Motor neuron (in vitro differentiated cells): ENCODE measurements at regions of chr7 and their contacts with region 1.

Region 1: DNA sequence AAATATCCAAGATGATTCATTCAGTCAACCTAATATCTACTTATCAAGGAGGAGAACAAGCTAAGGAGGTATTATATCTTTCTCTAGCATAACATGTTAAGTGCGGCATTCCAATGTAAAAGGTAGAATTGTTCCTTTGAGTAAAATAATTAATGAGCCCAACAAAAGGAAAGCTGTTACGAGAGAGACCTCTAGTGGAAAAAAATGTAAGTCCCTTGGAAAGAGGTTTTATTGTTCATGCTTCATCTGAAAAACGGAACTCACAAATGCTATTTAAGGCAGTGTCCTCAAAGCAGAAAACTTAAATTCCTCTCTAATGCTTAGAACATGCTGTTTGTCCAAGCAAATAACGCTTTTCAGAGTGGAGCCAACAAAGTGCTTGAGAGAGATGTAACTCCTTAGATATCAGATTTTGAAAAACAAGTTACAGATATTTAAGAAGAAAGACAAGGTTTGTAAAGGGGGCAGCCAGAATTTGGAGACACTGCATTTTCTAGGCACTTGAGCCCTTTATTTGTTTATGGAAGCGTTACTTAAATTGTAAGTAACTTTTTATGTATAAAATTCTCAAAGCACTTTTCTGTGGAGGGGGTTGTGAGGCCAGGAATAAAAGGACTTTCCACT is 119.9 kb downstream of the TFEC start:
- ATAC-seq: peak in 3 of 8 experiments; percentile 31 to 47 (median 41)
- H3K4me3 ChIP-seq: no peak overlapping the region
- H3K27ac ChIP-seq: no peak overlapping the region
- H3K4me1 ChIP-seq: no peaks in the 10 kb centered on the region

Region 2: GRCh38 chr7:116122972-116123595 is 212.4 kb after region 1 on chr7:
- in situ Hi-C with region 1: loop called in 1 of 9 experiments (anchors 10 kb)
- ATAC-seq: peak in 1 of 8 experiments; percentile 16
- H3K4me3 ChIP-seq: no peak overlapping the region
- H3K27ac ChIP-seq: no peak overlapping the region
- H3K4me1 ChIP-seq: peaks cover 0 to 3% of the 10 kb centered on the region in 2 donors

Region 3: DNA sequence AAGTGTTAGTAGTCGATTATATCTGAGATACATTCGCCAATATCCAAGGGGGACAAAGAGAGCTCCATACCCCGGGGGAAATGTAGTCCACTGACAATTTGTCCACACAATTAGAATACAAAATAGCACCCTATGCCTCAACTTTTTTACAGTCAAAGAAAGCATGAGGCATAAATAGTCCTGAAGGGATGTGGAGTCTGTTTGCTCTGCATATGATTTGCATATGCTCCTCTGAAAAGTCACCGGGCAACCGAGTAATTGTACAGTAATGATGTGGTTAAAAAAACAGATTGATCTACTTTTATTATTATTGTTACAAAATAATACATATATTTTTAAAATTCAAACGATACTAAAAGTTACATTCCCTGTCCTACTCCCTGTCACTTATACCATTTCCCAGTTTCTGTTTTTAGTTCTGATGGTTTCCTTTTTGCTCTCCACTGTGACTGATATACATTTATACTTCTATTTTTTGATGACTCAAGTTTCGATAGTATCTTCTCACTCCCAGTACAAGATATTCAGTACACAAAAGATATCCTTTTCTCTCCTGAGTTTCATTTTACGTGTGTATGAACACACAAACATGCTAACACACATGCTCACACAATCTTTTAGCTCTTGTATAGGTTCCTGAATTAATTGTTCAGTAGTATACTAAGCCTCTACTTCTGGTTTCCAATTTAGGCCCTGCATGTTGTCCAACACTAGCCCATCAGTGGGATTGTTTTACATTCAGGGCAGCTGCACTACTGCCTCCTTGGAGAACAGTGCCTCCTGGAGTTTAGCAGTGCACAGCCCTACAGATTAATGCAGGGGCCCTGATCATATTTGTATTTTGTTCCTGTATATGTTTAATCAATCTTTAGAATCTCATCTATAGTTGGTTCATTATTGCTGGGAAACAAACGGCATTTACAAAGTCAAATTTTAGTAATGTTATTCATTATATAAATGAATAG is 430.6 kb after region 1 on chr7:
- in situ Hi-C with region 1: no loop called
- ATAC-seq: peak in 3 of 8 experiments; percentile 31 to 81 (median 75)
- H3K4me3 ChIP-seq: no peak overlapping the region
- H3K27ac ChIP-seq: no peak overlapping the region
- H3K4me1 ChIP-seq: peaks cover 0 to 4% of the 10 kb centered on the region in 2 donors